Activated CD4-positive, alpha-beta T cell treated with anti-CD3 and anti-CD28 coated beads, Interleukin-2, amount 10 ng/mL, durations not matched to agents 24 days and 14 days (primary cell): ENCODE measurements at regions of chr3 and their contacts with region 1.

Region 1: GRCh38 chr3:32973982-32974381 is 22.5 kb downstream of the CCR4 start:
- DNase-seq: peak; percentile 85
- H3K4me3 Mint-ChIP-seq: peak overlapping the region; percentile 33
- H3K27ac Mint-ChIP-seq: peak overlapping the region; percentile 46
- H3K4me1 Mint-ChIP-seq: peaks cover 37% of the 10 kb centered on the region
- H3K27me3 Mint-ChIP-seq: no peaks in the 10 kb centered on the region

Region 2: GRCh38 chr3:32960404-32961170 is 13.4 kb before region 1 on chr3:
- intact Hi-C with region 1: loop called (anchors 2 kb)
- DNase-seq: no peak
- H3K4me3 Mint-ChIP-seq: peak overlapping the region; percentile 68
- H3K27ac Mint-ChIP-seq: peak overlapping the region; percentile 96
- H3K4me1 Mint-ChIP-seq: peaks cover 46% of the 10 kb centered on the region
- H3K27me3 Mint-ChIP-seq: no peaks in the 10 kb centered on the region